ENCODE measurements at regions of chr17 and their contacts with region 1.

Region 1: GRCh38 chr17:80855948-80856862 is 135.4 kb upstream of the CHMP6 start:
- DNase-seq: peak; percentile 94 to 96
- ATAC-seq: peak; percentile 93 to 94
- H3K4me3 ChIP-seq: no peak overlapping the region
- H3K27ac ChIP-seq: peak overlapping the region; percentile 90 to 93 (median 91)
- H3K4me1 ChIP-seq: peaks cover 42 to 45% of the 10 kb centered on the region in 2 donors
- H3K27me3 ChIP-seq: no peaks in the 10 kb centered on the region
- CTCF ChIP-seq: no peak
- POLR2A ChIP-seq: peak; percentile 56 to 74

Region 2: DNA sequence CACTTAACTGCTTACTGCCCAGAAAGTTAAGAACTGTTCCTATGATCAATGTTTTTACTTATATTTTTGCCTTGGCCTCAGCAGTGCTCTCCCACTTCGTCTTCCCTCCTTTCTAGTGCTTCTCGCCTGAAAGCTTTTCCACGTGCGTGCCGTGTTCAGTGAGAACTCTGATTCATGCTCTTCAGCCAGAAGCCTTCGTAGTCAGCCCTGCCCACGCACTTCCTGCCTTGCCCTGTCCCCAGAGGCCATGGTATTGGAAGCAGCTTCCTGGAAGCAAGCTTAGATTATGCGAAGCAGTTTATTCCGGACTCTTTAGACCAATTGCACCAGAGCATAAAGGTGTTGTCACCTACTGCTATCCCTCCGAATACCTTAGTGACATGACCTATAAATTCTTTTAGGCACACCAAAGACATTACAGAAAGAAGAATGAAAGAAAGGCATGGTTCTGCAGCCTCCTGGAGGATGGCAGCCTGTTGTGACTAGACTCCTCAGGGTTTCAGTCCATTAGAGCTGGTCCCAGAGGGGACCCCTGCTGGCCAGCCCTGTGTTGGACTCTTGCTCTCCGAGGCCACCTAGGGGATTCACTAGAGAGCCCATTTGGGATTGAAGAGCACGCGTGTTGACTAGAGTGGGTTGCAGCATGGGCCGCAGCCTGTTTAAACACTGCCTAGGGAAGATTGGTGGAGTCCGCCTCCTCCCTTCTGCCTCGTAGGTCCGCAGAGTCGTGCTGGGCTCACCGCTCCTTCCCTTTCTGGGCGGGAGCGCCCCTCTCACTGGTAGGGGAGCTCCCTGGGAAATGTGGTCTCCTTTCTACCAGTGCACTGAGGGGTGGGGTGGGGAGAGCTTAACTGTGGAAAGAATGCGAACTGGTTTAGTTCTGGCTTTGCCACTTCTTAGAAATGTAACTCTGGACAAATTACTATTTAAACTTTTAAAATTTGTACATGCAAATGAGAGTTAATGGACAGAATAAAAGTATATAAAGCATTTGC is 206.2 kb before region 1 on chr17:
- in situ Hi-C with region 1: no loop called
- intact Hi-C with region 1: loop called (anchors 2 kb)
- DNase-seq: peak; percentile 22 to 48
- ATAC-seq: peak; percentile 29 to 43
- H3K4me3 ChIP-seq: peak overlapping the region in 1 of 4 donors; percentile 3
- H3K27ac ChIP-seq: peak overlapping the region; percentile 56 to 78 (median 62)
- H3K4me1 ChIP-seq: peaks cover 30 to 47% of the 10 kb centered on the region in 2 donors
- H3K27me3 ChIP-seq: no peaks in the 10 kb centered on the region
- CTCF ChIP-seq: peak in 4 of 5 experiments; percentile 26 to 48 (median 38)
- POLR2A ChIP-seq: no peak

Region 3: DNA sequence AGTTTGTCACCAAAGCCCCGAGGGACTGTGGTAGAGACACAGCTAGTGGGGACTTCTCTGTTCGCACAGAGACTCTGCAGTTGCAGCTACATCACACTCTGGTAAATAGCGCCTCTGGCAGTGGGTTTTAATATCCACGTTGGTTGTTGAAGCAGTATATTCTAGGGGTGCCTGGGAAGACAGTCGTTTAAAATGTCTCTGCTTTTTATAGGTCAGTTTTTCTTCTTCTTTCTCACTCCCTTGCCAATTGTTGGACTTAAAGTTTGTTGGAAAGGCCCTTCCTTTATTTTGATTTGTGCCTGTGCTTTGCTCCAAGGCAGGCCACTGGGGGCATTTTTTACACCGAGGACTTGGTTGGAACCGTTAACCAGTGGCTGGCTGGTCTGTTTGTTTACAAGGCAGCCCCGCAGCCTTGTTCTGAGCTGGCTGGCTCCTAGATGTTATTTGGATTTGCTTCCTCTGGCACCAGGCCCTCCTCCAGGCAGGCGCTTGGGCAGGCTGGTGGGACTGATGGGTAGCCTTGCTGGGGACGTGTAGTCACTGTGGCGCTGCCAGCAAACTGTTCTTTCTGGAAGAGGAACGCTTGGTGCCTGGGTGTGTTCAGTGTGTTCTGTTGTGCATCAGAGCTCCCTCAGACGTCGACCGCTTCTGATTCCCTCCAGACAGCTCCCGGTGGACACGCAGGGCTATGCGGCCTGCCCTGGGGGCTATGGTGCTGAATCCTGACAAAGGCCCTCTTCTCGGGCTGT is 82.8 kb before region 1 on chr17:
- in situ Hi-C with region 1: no loop called
- intact Hi-C with region 1: loop called (anchors 5 kb)
- DNase-seq: peak; percentile 94 to 95
- ATAC-seq: peak; percentile 81 to 82
- H3K4me3 ChIP-seq: peak overlapping the region; percentile 19 to 34 (median 23)
- H3K27ac ChIP-seq: peak overlapping the region; percentile 88 to 97 (median 93)
- H3K4me1 ChIP-seq: peaks cover 41 to 51% of the 10 kb centered on the region in 2 donors
- H3K27me3 ChIP-seq: no peaks in the 10 kb centered on the region
- CTCF ChIP-seq: no peak
- POLR2A ChIP-seq: peak; percentile 41 to 57

Region 4: DNA sequence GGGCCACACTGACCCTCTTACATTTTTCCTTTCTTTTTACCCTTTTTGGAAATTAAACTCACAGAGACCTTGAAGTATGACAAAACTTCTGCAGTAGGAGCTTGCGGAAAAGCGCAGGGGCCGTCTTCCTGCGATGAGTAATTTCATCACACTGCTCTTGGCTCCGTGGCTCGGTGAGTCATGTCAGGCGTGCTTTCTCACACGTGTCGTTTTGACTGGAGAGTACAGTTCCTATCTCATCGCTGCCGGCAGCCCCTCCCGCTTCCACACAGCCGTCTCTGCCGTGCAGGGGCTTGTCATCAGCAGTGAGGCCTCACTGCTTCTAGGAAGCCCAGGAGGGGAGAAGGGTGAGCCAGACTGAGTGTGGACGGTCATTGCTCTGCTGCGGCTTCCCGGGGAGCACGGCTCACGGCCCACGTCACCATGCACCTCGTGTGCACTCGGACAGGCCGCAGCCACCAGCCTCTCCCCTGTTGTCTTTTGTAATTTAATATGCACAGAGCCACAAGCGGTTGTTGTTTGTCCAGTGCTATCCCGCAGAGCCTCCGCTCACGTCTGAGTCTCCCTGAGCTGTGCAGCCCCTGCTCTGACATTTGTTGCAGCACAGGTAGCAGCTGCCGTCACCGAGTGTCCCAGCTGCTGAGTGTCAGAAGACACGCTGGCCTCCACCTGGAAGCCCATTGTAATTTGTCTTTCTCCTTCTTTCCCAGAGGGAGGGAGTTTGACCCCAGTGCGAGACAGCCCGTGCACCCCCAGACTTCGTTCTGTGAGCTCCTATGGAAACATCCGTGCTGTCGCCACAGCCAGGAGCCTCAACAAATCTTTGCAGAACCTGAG is 36.0 kb after region 1 on chr17:
- in situ Hi-C with region 1: no loop called
- intact Hi-C with region 1: no loop called
- DNase-seq: peak; percentile 78 to 88
- ATAC-seq: peak; percentile 81 to 89
- H3K4me3 ChIP-seq: no peak overlapping the region
- H3K27ac ChIP-seq: peak overlapping the region; percentile 63 to 85 (median 82)
- H3K4me1 ChIP-seq: peaks cover 7 to 15% of the 10 kb centered on the region in 2 donors
- H3K27me3 ChIP-seq: no peaks in the 10 kb centered on the region
- CTCF ChIP-seq: no peak
- POLR2A ChIP-seq: no peak

Measured in gastrocnemius medialis (tissue), 4 donors.